GM12878 (cell line): ENCODE measurements at regions of chr6 and their contacts with region 1.

Region 1: GRCh38 chr6:143940011-143940597 is 68.0 kb downstream of the PLAGL1 start:
- DNase-seq: peak; percentile 30
- ATAC-seq: peak; percentile 99
- H3K4me3 ChIP-seq: no peak overlapping the region
- H3K27ac ChIP-seq: no peak overlapping the region
- H3K4me1 ChIP-seq: peaks cover 5% of the 10 kb centered on the region; the same call in 1 of the 2 replicates
- H3K27me3 ChIP-seq: no peaks in the 10 kb centered on the region
- CTCF ChIP-seq: peak; percentile 77 to 85 (median 80)
- EP300 ChIP-seq: no peak
- POLR2A ChIP-seq: no peak
- RAD21 ChIP-seq: peak; percentile 59

Region 2: DNA sequence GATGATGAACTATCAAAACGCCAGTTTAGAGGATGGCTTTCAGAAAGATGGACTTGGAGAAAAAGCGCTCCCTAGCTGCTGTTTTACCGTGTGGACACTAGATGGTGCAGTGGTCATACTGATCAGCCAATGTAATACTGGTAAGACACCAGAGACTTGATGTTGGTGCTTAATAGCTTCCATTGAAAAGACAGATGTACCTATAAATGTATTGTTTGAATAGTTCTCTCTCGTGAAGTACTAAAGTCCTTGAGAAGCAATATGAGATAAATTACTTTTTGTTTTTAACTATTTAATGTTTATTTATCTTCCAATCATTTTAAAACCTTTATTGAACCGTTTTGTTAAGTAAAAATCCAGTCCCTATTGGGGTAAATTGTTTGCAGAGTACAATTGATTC is 364.7 kb before region 1 on chr6:
- CTCF ChIA-PET with region 1: interaction called, 41 read pairs
- POLR2A ChIA-PET with region 1: no interaction called
- RAD21 ChIA-PET with region 1: interaction called, 24 read pairs
- SMC1A ChIA-PET with region 1: interaction called, 36 read pairs
- in situ Hi-C with region 1: no loop called
- intact Hi-C with region 1: loop called (anchors 2 kb)
- DNase-seq: peak; percentile 27
- ATAC-seq: peak; percentile 94
- H3K4me3 ChIP-seq: no peak overlapping the region
- H3K27ac ChIP-seq: no peak overlapping the region
- H3K4me1 ChIP-seq: no peaks in the 10 kb centered on the region
- H3K27me3 ChIP-seq: no peaks in the 10 kb centered on the region; a peak in 2 of 4 replicates
- CTCF ChIP-seq: peak; percentile 63 to 81 (median 79)
- EP300 ChIP-seq: no peak
- POLR2A ChIP-seq: no peak
- RAD21 ChIP-seq: peak; percentile 89

Region 3: DNA sequence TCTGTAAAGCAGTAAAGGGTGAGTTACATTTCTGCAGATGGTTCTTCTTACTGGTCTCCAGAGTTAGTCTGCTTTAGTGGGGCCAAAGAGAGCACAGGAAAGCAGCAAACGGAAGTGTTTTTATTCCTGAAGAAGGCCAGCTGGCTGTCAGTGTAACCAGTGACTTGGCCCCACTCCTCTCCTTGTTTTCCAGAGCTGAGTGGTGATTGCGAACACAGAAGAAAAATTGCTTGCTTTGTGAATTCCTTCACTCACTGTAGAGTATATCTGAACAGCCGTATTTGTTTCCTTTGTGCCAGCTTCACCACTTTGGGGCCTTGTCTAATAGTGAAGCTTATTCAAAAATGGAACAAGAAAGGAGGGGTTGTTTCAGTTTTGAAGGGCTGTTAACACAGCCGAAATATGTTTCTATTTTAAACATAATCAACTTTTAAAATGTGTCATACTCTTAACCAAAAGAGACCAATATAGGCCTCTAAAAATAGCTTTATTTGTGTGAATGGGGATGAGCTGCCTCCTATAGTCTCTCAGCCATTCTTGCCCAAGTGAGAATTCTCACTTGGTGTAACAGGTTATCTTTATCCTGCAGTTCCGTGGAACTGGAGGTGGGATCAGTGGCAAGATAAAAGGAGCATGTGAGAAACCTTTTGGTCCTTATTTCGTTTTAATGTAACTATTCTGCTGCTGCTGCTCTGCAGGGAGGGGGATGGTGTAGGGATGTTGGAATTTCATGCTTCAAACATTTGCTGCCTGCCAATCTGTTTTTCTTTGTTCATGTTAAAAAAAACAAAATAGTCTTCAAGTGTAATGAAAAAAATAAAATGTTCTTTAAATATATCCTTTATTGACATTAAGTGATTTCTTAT is 38.0 kb before region 1 on chr6:
- CTCF ChIA-PET with region 1: interaction called, 10 read pairs
- POLR2A ChIA-PET with region 1: no interaction called
- RAD21 ChIA-PET with region 1: interaction called, 3 read pairs
- SMC1A ChIA-PET with region 1: interaction called, 8 read pairs
- in situ Hi-C with region 1: no loop called
- intact Hi-C with region 1: no loop called
- DNase-seq: peak; percentile 48
- ATAC-seq: peak; percentile 96
- H3K4me3 ChIP-seq: peak overlapping the region; percentile 47; the same call in 1 of the 2 replicates
- H3K27ac ChIP-seq: peak overlapping the region; percentile 86
- H3K4me1 ChIP-seq: peaks cover 24% of the 10 kb centered on the region
- H3K27me3 ChIP-seq: no peaks in the 10 kb centered on the region
- CTCF ChIP-seq: no peak
- EP300 ChIP-seq: peak in 1 of 2 experiments; percentile 14; a peak in 1 of 4 replicates
- POLR2A ChIP-seq: no peak
- RAD21 ChIP-seq: peak; percentile 27

Region 4: GRCh38 chr6:143955971-143956370 is 15.9 kb after region 1 on chr6:
- CTCF ChIA-PET with region 1: interaction called, 35 read pairs
- POLR2A ChIA-PET with region 1: interaction called, 4 read pairs
- RAD21 ChIA-PET with region 1: interaction called, 6 read pairs
- SMC1A ChIA-PET with region 1: interaction called, 12 read pairs
- in situ Hi-C with region 1: no loop called
- intact Hi-C with region 1: no loop called
- DNase-seq: no peak
- ATAC-seq: no peak
- H3K4me3 ChIP-seq: no peak overlapping the region
- H3K27ac ChIP-seq: no peak overlapping the region
- H3K4me1 ChIP-seq: no peaks in the 10 kb centered on the region; the same call in 1 of the 2 replicates
- H3K27me3 ChIP-seq: no peaks in the 10 kb centered on the region
- CTCF ChIP-seq: no peak
- EP300 ChIP-seq: no peak
- POLR2A ChIP-seq: no peak
- RAD21 ChIP-seq: no peak

Region 5: DNA sequence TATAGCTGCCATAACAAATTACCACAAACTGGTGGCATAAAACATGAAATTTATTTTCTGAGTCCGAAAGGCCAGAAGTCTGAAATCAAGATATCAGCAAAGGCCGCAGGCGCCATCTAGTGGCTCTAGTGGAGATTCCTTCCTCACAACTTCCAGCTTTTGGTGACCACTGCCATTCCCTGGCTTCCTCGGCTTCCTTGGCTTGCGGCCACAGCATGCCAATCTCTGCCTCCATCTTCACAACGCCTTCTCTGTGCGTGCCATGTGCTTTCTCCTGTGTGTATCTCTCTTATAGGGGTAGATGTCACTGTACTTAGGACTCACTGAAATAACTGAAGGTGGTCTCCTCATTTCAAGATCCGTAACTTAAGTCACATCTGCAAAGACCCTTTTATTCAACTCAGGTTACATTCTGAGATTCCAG is 73.4 kb after region 1 on chr6:
- CTCF ChIA-PET with region 1: interaction called, 164 read pairs
- POLR2A ChIA-PET with region 1: interaction called, 3 read pairs
- RAD21 ChIA-PET with region 1: interaction called, 8 read pairs
- SMC1A ChIA-PET with region 1: interaction called, 36 read pairs
- in situ Hi-C with region 1: loop called (anchors 5 kb)
- intact Hi-C with region 1: loop called (anchors 1 kb)
- DNase-seq: no peak
- ATAC-seq: peak; percentile 68
- H3K4me3 ChIP-seq: no peak overlapping the region
- H3K27ac ChIP-seq: no peak overlapping the region
- H3K4me1 ChIP-seq: no peaks in the 10 kb centered on the region
- H3K27me3 ChIP-seq: peaks cover 0 to 2% of the 10 kb centered on the region in 2 experiments; a peak in 2 of 4 replicates
- CTCF ChIP-seq: peak; percentile 78 to 88 (median 84)
- EP300 ChIP-seq: no peak
- POLR2A ChIP-seq: no peak
- RAD21 ChIP-seq: peak; percentile 94

Region 6: DNA sequence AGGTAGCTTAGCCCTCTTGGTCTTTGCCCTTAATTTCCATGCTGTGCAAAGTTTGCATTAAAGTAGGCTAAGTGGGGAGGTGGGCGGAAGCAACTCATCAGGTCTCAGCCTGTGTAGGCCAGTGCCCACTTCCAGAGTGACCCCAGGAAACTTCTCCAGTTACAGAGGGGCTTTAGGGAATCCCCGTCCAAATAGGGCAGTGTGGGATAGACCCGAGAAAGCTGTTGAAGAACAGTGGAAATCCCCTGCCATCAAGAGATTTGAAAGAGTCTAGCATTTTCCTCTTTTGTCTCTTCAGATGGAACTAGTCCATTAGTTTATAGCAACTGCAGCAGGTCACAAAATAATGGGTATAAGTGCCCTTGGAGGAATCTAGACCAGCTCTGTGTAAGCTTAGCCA is 135.1 kb after region 1 on chr6:
- CTCF ChIA-PET with region 1: interaction called, 13 read pairs
- POLR2A ChIA-PET with region 1: interaction called, 3 read pairs
- RAD21 ChIA-PET with region 1: no interaction called
- SMC1A ChIA-PET with region 1: interaction called, 11 read pairs
- in situ Hi-C with region 1: no loop called
- intact Hi-C with region 1: no loop called
- DNase-seq: no peak
- ATAC-seq: peak; percentile 92
- H3K4me3 ChIP-seq: no peak overlapping the region; the same call in 1 of the 2 replicates
- H3K27ac ChIP-seq: peak overlapping the region; percentile 68
- H3K4me1 ChIP-seq: peaks cover 15% of the 10 kb centered on the region
- H3K27me3 ChIP-seq: no peaks in the 10 kb centered on the region
- CTCF ChIP-seq: no peak
- EP300 ChIP-seq: no peak
- POLR2A ChIP-seq: no peak
- RAD21 ChIP-seq: no peak

Region 7: DNA sequence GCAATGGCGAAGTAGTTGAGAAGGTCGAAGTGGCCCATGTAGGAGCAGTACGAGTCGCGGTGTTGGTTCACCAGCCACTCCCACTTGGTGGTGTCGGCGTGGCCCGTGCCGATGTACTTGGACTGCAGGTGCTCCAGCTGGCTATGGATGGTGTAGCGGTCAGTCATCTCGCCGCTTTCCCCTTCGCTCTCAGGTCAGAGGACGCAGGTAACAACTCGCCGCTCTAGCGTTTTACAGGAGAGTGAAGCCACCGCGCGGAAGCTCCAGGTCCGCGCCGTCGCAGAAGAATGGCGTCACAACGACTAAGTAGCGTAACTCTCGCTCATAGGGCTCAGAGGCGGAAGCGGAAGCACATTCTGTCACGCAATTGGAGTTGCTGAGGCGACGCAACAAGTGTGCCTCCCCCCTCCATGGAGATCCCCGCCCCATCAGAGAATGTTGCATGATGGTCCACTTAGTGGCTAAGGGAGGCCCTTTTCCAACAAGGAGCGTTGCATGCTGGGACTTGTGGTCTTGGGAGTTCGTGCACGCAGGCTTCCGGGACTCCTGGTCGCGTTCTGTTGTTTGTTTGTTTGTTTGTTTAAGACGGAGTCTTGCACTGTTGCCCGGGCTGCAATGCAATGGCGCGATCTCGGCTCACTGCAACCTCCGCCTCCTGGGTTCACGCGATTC is 155.4 kb after region 1 on chr6 and contains the start of gene SF3B5:
- CTCF ChIA-PET with region 1: interaction called, 244 read pairs
- POLR2A ChIA-PET with region 1: interaction called, 4 read pairs
- RAD21 ChIA-PET with region 1: interaction called, 119 read pairs
- SMC1A ChIA-PET with region 1: interaction called, 112 read pairs
- in situ Hi-C with region 1: loop called (anchors 5 kb)
- intact Hi-C with region 1: loop called (anchors 1 kb)
- DNase-seq: peak; percentile 99
- ATAC-seq: peak; percentile 96
- H3K4me3 ChIP-seq: peak within 1 kb of the TSS; percentile 92
- H3K27ac ChIP-seq: peak within 1 kb of the TSS; percentile 81
- H3K4me1 ChIP-seq: peaks cover 15% of the 10 kb centered on the region
- H3K27me3 ChIP-seq: no peaks in the 10 kb centered on the region
- CTCF ChIP-seq: no peak
- EP300 ChIP-seq: no peak
- POLR2A ChIP-seq: peak; percentile 99
- RAD21 ChIP-seq: no peak
- polyA plus RNA-seq, gene SF3B5: 700 to 864 TPM